H1 (cell line): ENCODE measurements at regions of chr5 and their contacts with region 1.

Region 1: GRCh38 chr5:150217873-150218692 is 28.2 kb downstream of the SLC6A7 start:
- DNase-seq: peak; percentile 61 to 92
- H3K4me3 ChIP-seq: no peak overlapping the region
- H3K27ac ChIP-seq: no peak overlapping the region
- H3K4me1 ChIP-seq: 0 out of 7 replicates have a peak, but pooled peaks cover 0 to 3% (median 0%) of the 10 kb centered on the region in 4 experiments
- H3K27me3 ChIP-seq: peaks cover 0 to 6% (median 4%) of the 10 kb centered on the region in 4 experiments; a peak in 3 of 7 replicates
- CTCF ChIP-seq: peak in 2 of 3 experiments; percentile 89 to 95; a peak in 3 of 4 replicates
- EP300 ChIP-seq: no peak
- POLR2A ChIP-seq: no peak
- RAD21 ChIP-seq: peak; percentile 97 to 98

Region 2: DNA sequence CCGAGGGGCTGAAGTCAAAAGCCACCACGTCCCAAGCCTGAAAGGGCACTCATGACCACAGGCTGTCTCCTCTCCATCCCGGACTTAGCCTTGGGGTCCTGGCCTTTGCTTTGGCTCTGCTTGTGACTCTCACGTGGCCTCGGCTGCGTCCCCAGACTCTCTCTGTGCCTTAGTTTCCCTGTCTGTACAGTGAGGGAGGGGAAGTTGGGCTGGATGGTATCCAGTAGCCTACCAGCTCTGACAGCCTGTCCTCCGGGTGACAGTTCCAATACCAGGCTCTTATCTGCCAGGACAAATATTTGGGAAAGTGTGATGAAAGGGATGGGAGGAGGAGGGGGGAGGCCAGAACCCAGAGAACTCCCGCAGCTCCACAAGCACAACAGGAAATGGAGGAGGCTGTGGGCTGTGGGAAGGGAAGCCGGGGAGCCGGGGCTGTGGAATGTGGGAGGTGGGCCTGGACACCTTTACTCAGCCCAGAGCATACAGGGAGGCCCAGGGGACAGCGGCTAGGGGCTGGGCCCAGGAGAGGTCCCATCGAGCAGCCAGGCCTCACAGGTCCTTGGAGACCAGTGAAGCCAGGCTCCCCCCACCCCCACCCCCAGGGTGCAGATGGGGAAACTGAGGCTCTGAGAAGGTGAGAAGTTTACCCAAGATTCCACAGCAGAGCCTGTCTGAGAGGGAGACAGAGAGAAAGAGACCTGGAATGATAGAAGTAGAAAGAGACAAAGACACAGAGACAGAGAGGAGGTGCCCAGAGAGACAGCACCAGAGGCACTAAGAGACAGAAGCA is 80.7 kb before region 1 on chr5:
- CTCF ChIA-PET with region 1: interaction called, 47 read pairs
- POLR2A ChIA-PET with region 1: interaction called, 5 read pairs
- DNase-seq: no peak
- H3K4me3 ChIP-seq: no peak overlapping the region
- H3K27ac ChIP-seq: no peak overlapping the region
- H3K4me1 ChIP-seq: peaks cover 4 to 32% (median 26%) of the 10 kb centered on the region in 4 experiments
- H3K27me3 ChIP-seq: no peaks in the 10 kb centered on the region; a peak in 3 of 7 replicates
- CTCF ChIP-seq: no peak
- EP300 ChIP-seq: no peak
- POLR2A ChIP-seq: no peak
- RAD21 ChIP-seq: no peak

Region 3: DNA sequence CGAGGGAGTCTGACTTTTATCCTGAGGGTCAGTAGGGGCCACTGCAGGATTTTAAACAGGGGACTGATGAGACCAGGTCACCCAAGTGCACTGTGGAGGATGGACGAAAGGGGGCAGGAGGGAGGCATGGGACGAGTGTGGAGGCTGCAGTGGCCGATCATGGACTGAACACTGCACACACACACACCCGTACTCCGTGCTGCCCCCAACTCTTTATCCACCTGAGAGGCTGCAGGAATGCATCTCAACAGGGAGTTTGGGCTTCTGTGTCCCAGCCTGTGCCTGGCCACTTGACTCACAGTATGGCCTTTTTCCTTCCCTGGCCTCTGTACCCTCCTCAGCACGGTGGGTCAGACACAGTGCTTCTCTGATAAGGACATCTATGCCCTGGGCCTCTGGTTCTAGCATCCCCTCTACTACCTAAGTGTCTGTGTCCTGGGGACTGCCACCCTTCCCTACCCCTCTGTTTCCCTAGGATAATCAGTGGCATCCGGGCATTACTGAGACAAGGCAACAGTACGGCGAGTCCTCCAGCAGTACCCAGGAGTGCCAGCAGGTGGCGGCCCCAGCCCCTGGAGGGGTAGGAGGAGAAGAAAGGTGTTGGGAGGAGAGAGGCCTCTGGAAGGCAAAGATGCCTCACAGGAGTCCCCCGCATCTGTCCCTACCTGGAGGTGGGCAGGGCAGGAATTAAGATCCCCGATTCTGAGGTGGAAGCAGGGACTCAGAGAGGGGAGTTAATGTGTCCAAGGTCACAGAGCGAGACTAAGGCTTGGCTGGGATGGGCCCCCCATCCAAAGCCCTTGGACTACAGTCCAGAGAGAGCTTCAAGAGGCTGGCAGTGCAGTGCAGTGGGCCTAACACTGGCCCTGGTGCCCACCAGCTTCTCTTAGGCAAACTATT is 56.6 kb before region 1 on chr5:
- CTCF ChIA-PET with region 1: interaction called, 372 read pairs
- POLR2A ChIA-PET with region 1: interaction called, 4 read pairs
- DNase-seq: peak in 1 of 2 experiments; percentile 100
- H3K4me3 ChIP-seq: peak overlapping the region in 1 of 4 experiments; percentile 10; a peak in 1 of 8 replicates
- H3K27ac ChIP-seq: no peak overlapping the region
- H3K4me1 ChIP-seq: peaks cover 3 to 10% (median 6%) of the 10 kb centered on the region in 4 experiments
- H3K27me3 ChIP-seq: peaks cover 21 to 31% (median 26%) of the 10 kb centered on the region in 4 experiments
- CTCF ChIP-seq: peak in 2 of 3 experiments; percentile 92 to 99; a peak in 3 of 4 replicates
- EP300 ChIP-seq: no peak
- POLR2A ChIP-seq: no peak
- RAD21 ChIP-seq: peak; percentile 90 to 93

Region 4: GRCh38 chr5:150234576-150235499 is 16.8 kb after region 1 on chr5:
- CTCF ChIA-PET with region 1: interaction called, 21 read pairs
- POLR2A ChIA-PET with region 1: interaction called, 3 read pairs
- DNase-seq: no peak
- H3K4me3 ChIP-seq: no peak overlapping the region
- H3K27ac ChIP-seq: no peak overlapping the region
- H3K4me1 ChIP-seq: no peaks in the 10 kb centered on the region
- H3K27me3 ChIP-seq: no peaks in the 10 kb centered on the region
- CTCF ChIP-seq: no peak
- EP300 ChIP-seq: no peak
- POLR2A ChIP-seq: no peak
- RAD21 ChIP-seq: no peak

Region 5: GRCh38 chr5:150256410-150257064 is 38.5 kb after region 1 on chr5:
- CTCF ChIA-PET with region 1: interaction called, 15 read pairs
- POLR2A ChIA-PET with region 1: no interaction called
- DNase-seq: peak in 1 of 2 experiments; percentile 64
- H3K4me3 ChIP-seq: no peak overlapping the region
- H3K27ac ChIP-seq: no peak overlapping the region
- H3K4me1 ChIP-seq: peaks cover 0 to 3% (median 1%) of the 10 kb centered on the region in 4 experiments; a peak in 3 of 7 replicates
- H3K27me3 ChIP-seq: no peaks in the 10 kb centered on the region; a peak in 2 of 7 replicates
- CTCF ChIP-seq: peak; percentile 72 to 82 (median 75)
- EP300 ChIP-seq: no peak
- POLR2A ChIP-seq: no peak
- RAD21 ChIP-seq: peak; percentile 72 to 82